Heart left ventricle (tissue), 16 donors: ENCODE measurements at regions of chr17 and their contacts with region 1.

Region 1: DNA sequence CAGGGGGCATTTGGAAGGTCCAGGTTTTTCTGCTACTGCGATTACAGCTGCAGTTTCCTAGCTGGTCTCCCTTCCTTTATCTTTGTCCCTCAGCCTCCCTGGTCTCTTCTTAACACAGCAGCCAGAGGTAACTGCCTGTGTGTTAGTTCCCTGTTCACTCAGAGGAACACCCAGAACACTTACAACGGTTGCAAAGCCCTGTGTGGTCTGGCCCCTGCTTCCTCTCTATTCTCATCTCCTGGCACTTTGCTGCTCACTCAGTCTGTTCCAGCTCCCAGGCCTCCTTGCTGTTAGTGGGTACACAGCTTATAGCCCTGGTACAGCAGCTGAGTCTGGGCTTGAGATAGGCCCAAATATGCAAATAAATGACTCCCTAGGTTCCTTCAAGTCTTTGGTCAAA is 16.4 kb downstream of the NTN1 start:
- DNase-seq: no peak
- ATAC-seq: no peak
- H3K4me3 ChIP-seq: no peak overlapping the region
- H3K27ac ChIP-seq: no peak overlapping the region
- H3K4me1 ChIP-seq: no peaks in the 10 kb centered on the region
- H3K27me3 ChIP-seq: no peaks in the 10 kb centered on the region
- CTCF ChIP-seq: no peak
- POLR2A ChIP-seq: no peak

Region 2: GRCh38 chr17:8966926-8967325 is 70.8 kb before region 1 on chr17:
- intact Hi-C with region 1: no loop called
- DNase-seq: peak in 1 of 5 donors; percentile 27
- ATAC-seq: peak in 3 of 4 donors; percentile 35 to 65 (median 52)
- H3K4me3 ChIP-seq: peak overlapping the region in 1 of 12 donors; percentile 84
- H3K27ac ChIP-seq: peak overlapping the region in 2 of 12 donors; percentile 37 to 95
- H3K4me1 ChIP-seq: peaks cover 0 to 28% (median 0%) of the 10 kb centered on the region in 12 donors
- H3K27me3 ChIP-seq: peaks cover 10 to 71% (median 12%) of the 10 kb centered on the region in 9 donors
- CTCF ChIP-seq: no peak
- POLR2A ChIP-seq: no peak

Region 3: DNA sequence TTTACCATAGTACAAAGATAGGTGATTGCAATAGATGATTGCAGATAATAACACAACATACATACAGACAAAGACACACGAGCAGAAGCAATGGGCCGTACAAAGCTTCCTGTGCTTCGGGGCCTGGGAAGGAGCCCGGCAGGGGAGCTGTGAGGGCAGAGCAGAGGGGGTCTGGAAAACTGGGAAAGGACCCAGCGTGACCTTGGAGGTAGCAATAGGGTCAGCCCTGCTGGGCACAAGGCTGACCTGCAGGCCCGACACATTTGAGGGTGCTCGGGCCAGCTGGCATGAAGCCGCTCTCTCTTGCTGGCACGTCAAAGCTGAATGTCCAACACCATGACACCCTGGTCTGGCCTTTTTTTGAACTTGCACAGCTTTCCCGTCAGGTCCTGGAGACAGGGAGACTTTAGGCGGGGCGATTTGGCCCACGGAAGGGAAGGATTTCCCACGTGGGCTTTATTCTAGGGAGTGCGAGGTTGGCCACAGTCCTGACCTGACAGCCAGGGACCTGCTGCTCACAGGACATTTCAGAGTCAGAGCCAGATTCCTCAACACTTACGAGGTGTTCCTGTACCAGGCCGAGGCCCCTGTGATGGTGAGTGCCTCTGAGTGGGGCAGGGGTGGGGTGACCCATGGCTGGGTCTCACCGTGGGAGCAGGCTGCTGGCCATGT is 66.8 kb after region 1 on chr17:
- intact Hi-C with region 1: loop called in 1 of 10 experiments (anchors 5 kb)
- DNase-seq: peak; percentile 57 to 89 (median 78)
- ATAC-seq: peak; percentile 94 to 96 (median 96)
- H3K4me3 ChIP-seq: peak overlapping the region in 1 of 12 donors; percentile 5
- H3K27ac ChIP-seq: peak overlapping the region in 11 of 12 donors; percentile 15 to 89 (median 67)
- H3K4me1 ChIP-seq: peaks cover 0 to 18% (median 3%) of the 10 kb centered on the region in 12 donors
- H3K27me3 ChIP-seq: no peaks in the 10 kb centered on the region
- CTCF ChIP-seq: peak in 2 of 12 donors; percentile 21 to 37
- POLR2A ChIP-seq: no peak